ENCODE measurements at regions of chr2 and their contacts with region 1.

Region 1: GRCh38 chr2:88880441-88880953 is 189.0 kb downstream of the RPIA start:
- DNase-seq: peak in 6 of 14 experiments; percentile 4 to 71 (median 41)
- ATAC-seq: peak; percentile 64
- H3K4me3 ChIP-seq: no peak overlapping the region
- H3K4me3 Mint-ChIP-seq: no peak overlapping the region
- H3K27ac ChIP-seq: no peak overlapping the region
- H3K27ac Mint-ChIP-seq: no peak overlapping the region
- H3K4me1 ChIP-seq: peaks cover 2% of the 10 kb centered on the region
- H3K4me1 Mint-ChIP-seq: no peaks in the 10 kb centered on the region
- H3K27me3 ChIP-seq: no peaks in the 10 kb centered on the region
- H3K27me3 Mint-ChIP-seq: peaks cover 9% of the 10 kb centered on the region
- CTCF ChIP-seq: peak; percentile 89

Region 2: DNA sequence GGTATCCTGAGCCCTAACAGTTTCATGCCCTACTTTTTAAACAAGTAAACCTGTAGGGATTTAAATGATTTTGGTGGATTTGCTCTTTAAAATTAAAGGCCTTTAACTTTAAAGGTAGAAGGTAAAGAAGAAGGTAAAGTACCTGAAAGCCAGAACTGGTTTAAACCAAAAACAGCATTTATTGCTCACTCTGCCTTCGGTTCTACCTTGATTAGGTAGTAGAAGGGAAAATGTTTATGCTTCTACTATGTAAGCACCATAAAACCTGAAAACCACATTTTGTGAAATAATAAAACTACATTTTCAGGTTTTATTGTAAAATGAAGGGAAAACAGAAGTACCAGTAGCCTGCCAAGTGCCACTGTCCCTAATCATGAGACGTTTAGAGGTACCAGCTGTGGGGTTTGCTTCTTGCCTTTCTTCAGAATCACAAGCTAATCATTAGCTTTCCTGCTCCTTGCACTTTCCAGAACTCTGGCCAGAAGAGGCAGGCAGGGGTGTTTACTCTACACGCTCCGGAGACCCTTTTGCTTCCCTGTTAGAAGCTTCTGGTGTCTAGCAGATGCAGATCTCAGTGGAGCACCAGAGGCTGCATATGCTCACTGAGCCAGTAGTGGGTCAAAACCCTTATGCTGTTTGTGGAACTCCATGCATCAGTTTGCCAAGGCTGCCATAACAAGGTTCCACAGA is 155.7 kb before region 1 on chr2:
- CTCF ChIA-PET with region 1: no interaction called
- POLR2A ChIA-PET with region 1: no interaction called
- intact Hi-C with region 1: no loop called
- DNase-seq: no peak
- ATAC-seq: no peak
- H3K4me3 ChIP-seq: no peak overlapping the region
- H3K4me3 Mint-ChIP-seq: no peak overlapping the region
- H3K27ac ChIP-seq: no peak overlapping the region
- H3K27ac Mint-ChIP-seq: no peak overlapping the region
- H3K4me1 ChIP-seq: no peaks in the 10 kb centered on the region
- H3K4me1 Mint-ChIP-seq: peaks cover 37% of the 10 kb centered on the region
- H3K27me3 ChIP-seq: no peaks in the 10 kb centered on the region
- H3K27me3 Mint-ChIP-seq: no peaks in the 10 kb centered on the region
- CTCF ChIP-seq: no peak

Region 3: DNA sequence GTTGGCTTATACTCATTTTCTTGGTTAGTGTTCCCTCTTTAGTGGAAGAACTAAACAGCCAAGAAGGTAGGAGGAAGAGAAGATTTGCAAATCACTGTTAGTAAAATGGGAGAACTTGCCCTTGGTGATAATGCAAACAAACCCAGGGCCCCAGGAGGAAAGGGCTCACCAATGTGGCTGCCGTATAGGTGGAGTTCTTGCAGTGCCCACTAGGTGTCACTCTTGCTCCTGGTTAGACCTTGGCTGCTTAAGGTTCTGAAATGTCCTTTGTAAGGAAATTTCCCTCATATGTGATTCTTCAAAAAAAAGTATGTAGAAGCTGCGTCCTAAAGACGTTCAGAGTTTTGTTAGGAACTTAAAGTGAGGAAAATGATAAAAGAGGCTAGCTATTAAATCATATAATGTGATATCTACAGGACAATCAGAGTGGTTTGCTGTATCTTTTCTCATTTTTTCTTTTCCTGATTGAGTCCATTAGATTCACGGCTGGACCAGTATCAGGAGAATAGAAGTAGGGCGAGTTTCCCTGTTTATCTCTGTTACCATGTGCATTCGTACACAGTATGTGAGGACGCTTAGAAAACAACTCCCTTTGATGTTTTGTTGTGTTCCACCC is 140.4 kb before region 1 on chr2:
- CTCF ChIA-PET with region 1: no interaction called
- POLR2A ChIA-PET with region 1: interaction called, 3 read pairs
- intact Hi-C with region 1: loop called (anchors 5 kb)
- DNase-seq: peak; percentile 49 to 84 (median 70)
- ATAC-seq: peak; percentile 97
- H3K4me3 ChIP-seq: no peak overlapping the region
- H3K4me3 Mint-ChIP-seq: no peak overlapping the region
- H3K27ac ChIP-seq: no peak overlapping the region
- H3K27ac Mint-ChIP-seq: peak overlapping the region; percentile 46
- H3K4me1 ChIP-seq: no peaks in the 10 kb centered on the region
- H3K4me1 Mint-ChIP-seq: peaks cover 19% of the 10 kb centered on the region
- H3K27me3 ChIP-seq: no peaks in the 10 kb centered on the region
- H3K27me3 Mint-ChIP-seq: no peaks in the 10 kb centered on the region
- CTCF ChIP-seq: peak; percentile 91

Region 4: GRCh38 chr2:88831792-88832248 is 48.7 kb before region 1 on chr2:
- CTCF ChIA-PET with region 1: no interaction called
- POLR2A ChIA-PET with region 1: no interaction called
- intact Hi-C with region 1: no loop called
- DNase-seq: peak in 8 of 14 experiments; percentile 5 to 44 (median 16)
- ATAC-seq: no peak
- H3K4me3 ChIP-seq: no peak overlapping the region
- H3K4me3 Mint-ChIP-seq: no peak overlapping the region
- H3K27ac ChIP-seq: no peak overlapping the region
- H3K27ac Mint-ChIP-seq: no peak overlapping the region
- H3K4me1 ChIP-seq: no peaks in the 10 kb centered on the region
- H3K4me1 Mint-ChIP-seq: no peaks in the 10 kb centered on the region
- H3K27me3 ChIP-seq: peaks cover 0 to 3% of the 10 kb centered on the region in 2 experiments
- H3K27me3 Mint-ChIP-seq: peaks cover 9% of the 10 kb centered on the region
- CTCF ChIP-seq: no peak

Region 5: DNA sequence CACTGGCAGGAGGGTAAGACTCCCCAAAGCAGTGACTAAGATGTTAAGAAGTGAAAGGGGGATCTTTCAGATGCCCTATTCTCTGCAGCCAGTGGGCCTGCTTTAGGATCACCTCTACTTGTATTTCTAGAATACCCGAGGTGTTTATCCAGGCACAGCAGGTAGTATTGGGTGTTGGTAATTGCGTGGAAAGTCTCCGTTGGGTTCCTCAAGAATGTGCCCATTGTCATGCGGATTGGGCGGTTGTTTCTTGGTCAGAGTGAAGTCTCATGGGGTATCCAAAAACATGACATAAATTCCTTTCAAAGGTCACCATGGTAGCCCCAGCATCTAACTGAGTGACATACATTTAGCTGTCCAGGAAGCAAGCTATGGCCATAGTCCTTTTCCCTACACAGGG is 119.7 kb after region 1 on chr2:
- CTCF ChIA-PET with region 1: no interaction called
- POLR2A ChIA-PET with region 1: no interaction called
- intact Hi-C with region 1: no loop called
- DNase-seq: no peak
- ATAC-seq: no peak
- H3K4me3 ChIP-seq: no peak overlapping the region
- H3K4me3 Mint-ChIP-seq: no peak overlapping the region
- H3K27ac ChIP-seq: no peak overlapping the region
- H3K27ac Mint-ChIP-seq: no peak overlapping the region
- H3K4me1 ChIP-seq: no peaks in the 10 kb centered on the region
- H3K4me1 Mint-ChIP-seq: no peaks in the 10 kb centered on the region
- H3K27me3 ChIP-seq: no peaks in the 10 kb centered on the region
- H3K27me3 Mint-ChIP-seq: peaks cover 5% of the 10 kb centered on the region
- CTCF ChIP-seq: no peak